Posterior vena cava (tissue), 2 donors: ENCODE measurements at regions of chr17 and their contacts with region 1.

Region 1: GRCh38 chr17:5971969-5972368 is 98.2 kb upstream of the WSCD1 start:
- DNase-seq: no peak

Region 2: DNA sequence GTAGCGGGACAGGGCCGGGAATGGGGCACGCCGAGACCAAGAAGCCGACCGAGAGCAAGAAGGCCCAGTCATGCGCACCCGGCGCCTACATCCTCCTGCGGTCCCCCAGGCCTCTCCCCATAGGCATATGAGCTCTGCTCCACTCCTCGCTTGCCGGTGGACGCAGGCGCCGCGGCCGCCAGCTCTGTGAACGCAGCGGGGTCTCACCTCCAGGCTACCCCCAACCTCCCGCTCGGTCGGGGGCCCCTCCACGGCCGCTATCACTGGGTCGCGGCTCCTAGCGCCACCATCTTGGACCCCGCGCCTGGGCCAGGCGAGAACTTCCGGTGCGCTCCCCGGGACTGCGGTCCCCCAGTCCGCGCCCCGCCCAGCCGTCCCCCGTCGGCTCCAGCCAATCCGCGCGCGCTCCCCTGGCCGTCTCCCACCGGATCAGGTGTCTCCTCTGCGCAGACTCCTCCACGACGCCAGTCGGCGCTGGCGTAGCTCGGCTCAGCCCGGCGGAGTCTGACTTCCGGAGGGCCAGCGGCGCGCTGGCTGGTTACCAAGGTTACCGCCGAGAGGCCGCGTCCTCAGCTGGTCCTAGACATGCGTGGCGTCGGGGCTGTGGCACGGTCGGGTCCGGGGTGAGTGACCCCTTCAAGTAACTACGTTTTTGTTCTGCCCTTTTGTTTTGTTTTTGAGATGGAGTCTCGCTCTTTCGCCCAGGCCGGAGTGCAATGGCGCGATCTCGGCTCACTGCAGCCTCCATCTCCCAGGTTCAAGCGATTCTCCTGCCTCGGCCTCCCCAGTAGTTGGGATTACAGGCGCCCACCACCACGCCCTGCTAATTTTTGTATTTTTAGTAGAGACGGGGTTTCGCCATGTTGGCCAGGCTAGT is 780.2 kb before region 1 on chr17 and contains the start of gene ZNF594:
- intact Hi-C with region 1: no loop called
- DNase-seq: peak; percentile 99
- total RNA-seq, gene ZNF594: 5.7 to 6.8 TPM

Region 3: GRCh38 chr17:5877948-5878347 is 94.0 kb before region 1 on chr17:
- intact Hi-C with region 1: no loop called
- DNase-seq: no peak

Region 4: DNA sequence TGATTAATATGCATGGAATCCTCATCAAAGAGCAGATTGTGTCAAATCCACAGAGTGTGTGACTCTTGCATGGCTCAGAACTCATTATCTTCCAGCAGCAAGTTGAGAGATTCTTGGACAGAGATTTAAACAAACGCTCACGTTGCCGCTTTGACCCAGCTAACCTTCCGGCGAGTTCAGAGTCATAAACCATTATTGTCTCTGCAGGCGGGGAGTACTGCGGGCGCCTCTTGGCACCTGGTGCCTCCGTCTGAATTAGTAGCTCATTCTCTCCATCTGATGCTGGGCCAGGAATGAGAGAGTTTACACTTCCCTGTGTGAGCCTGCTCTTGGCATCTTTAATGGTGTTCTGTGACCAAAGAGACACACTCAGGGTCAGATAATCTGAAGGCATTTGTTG is 40.4 kb before region 1 on chr17:
- intact Hi-C with region 1: loop called in 1 of 2 experiments (anchors 2 kb)
- DNase-seq: no peak